ENCODE measurements at regions of chr1 and their contacts with region 1.

Region 1: GRCh38 chr1:115980998-115981993 is 5.0 kb downstream of the SLC22A15 start:
- DNase-seq: no peak
- H3K4me3 Mint-ChIP-seq: no peak overlapping the region
- H3K27ac Mint-ChIP-seq: no peak overlapping the region
- H3K4me1 Mint-ChIP-seq: peaks cover 6% of the 10 kb centered on the region
- H3K27me3 Mint-ChIP-seq: peaks cover 21% of the 10 kb centered on the region

Region 2: DNA sequence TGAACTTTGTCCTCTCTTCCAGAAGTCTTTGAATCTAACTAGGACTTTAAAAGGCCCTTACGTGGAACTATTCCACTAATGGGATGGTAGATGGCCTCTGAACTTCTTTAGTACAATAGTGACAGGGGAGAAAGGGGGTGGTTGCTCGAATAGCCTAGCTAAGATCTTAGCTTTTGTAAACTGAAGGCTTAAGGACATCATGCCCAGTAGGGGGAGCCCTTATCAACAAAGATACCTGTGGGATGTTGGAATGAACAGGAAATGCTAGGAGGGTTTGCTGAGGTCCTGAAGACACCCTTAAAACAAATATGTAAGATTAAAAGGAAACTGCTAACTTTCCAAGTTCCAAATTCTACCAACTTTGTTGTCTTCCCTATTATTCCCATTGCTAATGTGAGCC is 173.6 kb before region 1 on chr1:
- CTCF ChIA-PET with region 1: interaction called, 16 read pairs
- POLR2A ChIA-PET with region 1: no interaction called
- DNase-seq: peak; percentile 28
- H3K4me3 Mint-ChIP-seq: no peak overlapping the region
- H3K27ac Mint-ChIP-seq: no peak overlapping the region
- H3K4me1 Mint-ChIP-seq: no peaks in the 10 kb centered on the region
- H3K27me3 Mint-ChIP-seq: peaks cover 18% of the 10 kb centered on the region

Region 3: DNA sequence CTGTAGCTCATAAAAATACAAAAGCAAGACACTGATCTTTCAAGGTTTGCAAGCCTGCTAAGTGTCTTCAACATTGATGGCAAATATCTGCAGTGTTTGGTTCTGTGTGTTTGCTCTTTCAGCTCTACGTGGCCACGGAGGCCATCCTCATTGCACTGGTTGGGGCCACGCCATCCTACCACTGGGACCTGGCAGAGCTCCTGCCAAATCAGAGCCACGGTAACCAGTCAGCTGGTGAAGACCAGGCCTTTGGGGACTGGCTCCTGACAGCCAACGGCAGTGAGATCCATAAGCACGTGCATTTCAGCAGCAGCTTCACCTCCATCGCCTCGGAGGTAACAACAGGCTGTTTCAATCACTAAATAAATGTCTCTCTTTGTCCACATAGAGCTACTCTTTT is 10.6 kb after region 1 on chr1:
- CTCF ChIA-PET with region 1: interaction called, 27 read pairs
- POLR2A ChIA-PET with region 1: interaction called, 3 read pairs
- DNase-seq: no peak
- H3K4me3 Mint-ChIP-seq: no peak overlapping the region
- H3K27ac Mint-ChIP-seq: no peak overlapping the region
- H3K4me1 Mint-ChIP-seq: no peaks in the 10 kb centered on the region
- H3K27me3 Mint-ChIP-seq: no peaks in the 10 kb centered on the region